ENCODE measurements at regions of chr11 and their contacts with region 1.

Region 1: DNA sequence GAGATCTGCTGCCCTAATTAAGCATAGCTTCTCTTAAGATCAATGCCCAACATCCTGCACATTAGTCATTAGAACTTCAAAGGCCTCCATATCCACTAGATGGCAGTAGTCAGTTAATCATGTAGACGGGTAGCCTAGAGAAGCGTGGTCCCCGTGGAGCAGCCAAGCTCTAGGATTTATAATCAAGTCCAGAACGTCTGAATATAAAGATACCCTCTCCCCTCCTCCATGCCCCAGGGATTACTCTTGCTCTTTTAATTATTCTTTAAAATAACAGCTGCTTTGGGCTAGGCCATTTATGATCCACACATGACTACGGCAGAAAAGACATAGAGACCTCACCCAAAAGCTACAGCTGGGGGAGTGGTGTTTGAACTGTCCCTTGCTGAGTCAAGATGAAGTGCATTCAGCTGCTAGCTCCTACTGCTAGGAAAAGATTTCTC is 327.6 kb upstream of the PLET1 start:
- DNase-seq: peak; percentile 88
- H3K4me3 Mint-ChIP-seq: no peak overlapping the region
- H3K27ac Mint-ChIP-seq: no peak overlapping the region
- H3K4me1 Mint-ChIP-seq: no peaks in the 10 kb centered on the region
- H3K27me3 Mint-ChIP-seq: no peaks in the 10 kb centered on the region
- CTCF ChIP-seq: peak; percentile 66

Region 2: DNA sequence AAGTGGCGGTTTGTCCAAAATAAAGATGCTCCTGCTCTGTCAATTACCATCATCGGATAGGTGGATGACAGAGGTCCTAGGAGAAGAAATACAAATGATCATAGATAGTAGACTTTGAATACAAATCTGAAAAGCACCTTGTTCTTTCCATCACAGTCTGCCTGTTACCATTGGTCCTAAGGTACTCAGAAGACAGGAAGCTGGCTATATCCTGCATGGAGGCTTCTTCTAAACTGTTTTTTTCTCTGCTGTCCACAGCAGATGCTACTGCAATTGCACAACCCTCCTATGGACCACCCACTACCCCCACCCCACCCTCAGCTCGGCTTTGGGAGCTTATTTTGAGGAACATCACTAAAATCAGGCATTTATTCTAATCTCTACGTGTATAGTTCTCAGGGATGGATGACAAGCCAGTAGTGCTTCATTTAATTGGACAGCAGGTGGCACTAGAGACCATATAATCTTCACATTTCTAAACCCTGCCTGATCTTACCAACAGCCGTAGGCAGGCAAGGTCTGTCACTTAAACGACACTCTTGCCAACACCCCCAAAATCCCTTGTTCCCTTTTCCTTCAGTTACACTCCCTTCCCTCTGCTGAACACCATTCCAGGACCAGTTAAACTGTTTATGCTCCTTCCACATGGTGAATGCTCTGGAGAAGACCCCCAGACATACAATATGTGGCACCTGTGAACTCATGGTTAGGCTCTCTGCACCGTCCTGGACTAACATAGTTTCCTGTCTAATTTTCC is 368.6 kb before region 1 on chr11:
- CTCF ChIA-PET with region 1: interaction called, 6 read pairs
- POLR2A ChIA-PET with region 1: no interaction called
- intact Hi-C with region 1: loop called (anchors 10 kb)
- DNase-seq: peak; percentile 84
- H3K4me3 Mint-ChIP-seq: no peak overlapping the region
- H3K27ac Mint-ChIP-seq: peak overlapping the region; percentile 21
- H3K4me1 Mint-ChIP-seq: peaks cover 27% of the 10 kb centered on the region
- H3K27me3 Mint-ChIP-seq: no peaks in the 10 kb centered on the region
- CTCF ChIP-seq: peak; percentile 76

Region 3: GRCh38 chr11:112599856-112600533 is 11.7 kb after region 1 on chr11:
- CTCF ChIA-PET with region 1: interaction called, 17 read pairs
- POLR2A ChIA-PET with region 1: no interaction called
- intact Hi-C with region 1: no loop called
- DNase-seq: no peak
- H3K4me3 Mint-ChIP-seq: no peak overlapping the region
- H3K27ac Mint-ChIP-seq: no peak overlapping the region
- H3K4me1 Mint-ChIP-seq: no peaks in the 10 kb centered on the region
- H3K27me3 Mint-ChIP-seq: no peaks in the 10 kb centered on the region
- CTCF ChIP-seq: no peak

Region 4: DNA sequence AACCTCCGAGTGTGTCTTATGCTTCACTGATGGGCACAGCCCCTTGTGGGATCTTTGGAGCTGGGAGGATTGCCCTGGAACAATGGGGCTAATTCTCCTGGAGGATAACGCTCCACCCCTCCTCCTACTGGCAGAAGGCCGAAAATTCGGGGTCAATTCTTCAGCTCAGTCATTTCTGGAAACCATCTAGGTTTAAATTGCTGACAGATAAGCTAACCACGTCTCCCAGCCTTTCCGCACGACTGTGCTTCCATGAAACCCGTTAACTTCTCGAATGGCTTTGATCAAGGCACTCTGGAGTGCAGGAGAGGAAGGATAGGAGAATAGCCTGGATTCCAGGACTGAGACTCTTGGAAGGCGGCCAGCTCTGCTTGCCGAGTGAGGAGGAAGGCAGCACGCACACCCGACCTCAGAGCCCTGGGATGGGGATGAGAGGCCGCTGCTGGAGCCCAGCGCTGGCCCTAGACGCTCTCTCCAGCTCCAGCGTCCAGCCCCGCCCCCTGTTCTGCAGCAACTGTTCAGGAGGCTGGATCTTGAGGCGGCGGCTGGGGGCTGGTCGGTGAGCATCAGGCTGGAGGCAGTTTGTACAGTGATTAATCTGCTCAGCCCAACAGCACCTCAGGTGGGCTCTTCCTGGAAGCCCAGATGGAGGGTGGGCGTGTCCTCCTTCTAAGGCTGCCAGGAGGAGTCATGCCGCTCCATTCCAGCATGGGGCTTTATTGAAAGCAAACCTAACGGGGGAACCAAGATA is 196.2 kb after region 1 on chr11:
- CTCF ChIA-PET with region 1: interaction called, 36 read pairs
- POLR2A ChIA-PET with region 1: no interaction called
- intact Hi-C with region 1: no loop called
- DNase-seq: peak; percentile 38
- H3K4me3 Mint-ChIP-seq: no peak overlapping the region
- H3K27ac Mint-ChIP-seq: no peak overlapping the region
- H3K4me1 Mint-ChIP-seq: peaks cover 9% of the 10 kb centered on the region
- H3K27me3 Mint-ChIP-seq: peaks cover 27% of the 10 kb centered on the region
- CTCF ChIP-seq: no peak

Region 5: GRCh38 chr11:112795142-112795815 is 207.0 kb after region 1 on chr11:
- CTCF ChIA-PET with region 1: interaction called, 166 read pairs
- POLR2A ChIA-PET with region 1: interaction called, 13 read pairs
- intact Hi-C with region 1: loop called (anchors 1 kb)
- DNase-seq: peak; percentile 72
- H3K4me3 Mint-ChIP-seq: no peak overlapping the region
- H3K27ac Mint-ChIP-seq: no peak overlapping the region
- H3K4me1 Mint-ChIP-seq: no peaks in the 10 kb centered on the region
- H3K27me3 Mint-ChIP-seq: no peaks in the 10 kb centered on the region
- CTCF ChIP-seq: peak; percentile 77

Region 6: GRCh38 chr11:112958670-112959069 is 370.4 kb after region 1 on chr11:
- CTCF ChIA-PET with region 1: interaction called, 6 read pairs
- POLR2A ChIA-PET with region 1: no interaction called
- intact Hi-C with region 1: loop called (anchors 10 kb)
- DNase-seq: peak; percentile 52
- H3K4me3 Mint-ChIP-seq: no peak overlapping the region
- H3K27ac Mint-ChIP-seq: no peak overlapping the region
- H3K4me1 Mint-ChIP-seq: peaks cover 14% of the 10 kb centered on the region
- H3K27me3 Mint-ChIP-seq: peaks cover 67% of the 10 kb centered on the region
- CTCF ChIP-seq: peak; percentile 6

Region 7: GRCh38 chr11:113282898-113283437 is 694.7 kb after region 1 on chr11:
- CTCF ChIA-PET with region 1: interaction called, 74 read pairs
- POLR2A ChIA-PET with region 1: no interaction called
- intact Hi-C with region 1: no loop called
- DNase-seq: no peak
- H3K4me3 Mint-ChIP-seq: no peak overlapping the region
- H3K27ac Mint-ChIP-seq: no peak overlapping the region
- H3K4me1 Mint-ChIP-seq: no peaks in the 10 kb centered on the region
- H3K27me3 Mint-ChIP-seq: no peaks in the 10 kb centered on the region
- CTCF ChIP-seq: no peak